Activated CD8-positive, alpha-beta T cell treated with anti-CD3 and anti-CD28 coated beads, Interleukin-2, amount 10 ng/mL, durations not matched to agents 7 days and 5 days (primary cell): ENCODE measurements at regions of chr14 and their contacts with region 1.

Region 1: GRCh38 chr14:73058224-73058921 is at the start of gene RBM25:
- DNase-seq: peak; percentile 98
- ATAC-seq: peak; percentile 97
- H3K4me3 Mint-ChIP-seq: no peak within 1 kb of the TSS
- H3K27ac Mint-ChIP-seq: no peak within 1 kb of the TSS
- H3K4me1 Mint-ChIP-seq: peaks cover 39% of the 10 kb centered on the region
- H3K27me3 Mint-ChIP-seq: peaks cover 3% of the 10 kb centered on the region
- total RNA-seq, gene RBM25: 89.5 to 95.1 TPM

Region 2: GRCh38 chr14:72154723-72155633 is 903.4 kb before region 1 on chr14:
- CTCF ChIA-PET with region 1: no interaction called
- POLR2A ChIA-PET with region 1: no interaction called
- DNase-seq: no peak
- ATAC-seq: no peak
- H3K4me3 Mint-ChIP-seq: no peak overlapping the region
- H3K27ac Mint-ChIP-seq: no peak overlapping the region
- H3K4me1 Mint-ChIP-seq: no peaks in the 10 kb centered on the region
- H3K27me3 Mint-ChIP-seq: no peaks in the 10 kb centered on the region

Region 3: GRCh38 chr14:73069585-73069984 is 11.2 kb after region 1 on chr14:
- CTCF ChIA-PET with region 1: interaction called, 3 read pairs
- POLR2A ChIA-PET with region 1: interaction called, 12 read pairs
- DNase-seq: no peak
- ATAC-seq: no peak
- H3K4me3 Mint-ChIP-seq: no peak overlapping the region
- H3K27ac Mint-ChIP-seq: no peak overlapping the region
- H3K4me1 Mint-ChIP-seq: peaks cover 5% of the 10 kb centered on the region
- H3K27me3 Mint-ChIP-seq: no peaks in the 10 kb centered on the region

Region 4: GRCh38 chr14:73136387-73137225 is 78.2 kb after region 1 on chr14 and contains the start of gene PSEN1:
- CTCF ChIA-PET with region 1: no interaction called
- POLR2A ChIA-PET with region 1: interaction called, 13 read pairs
- DNase-seq: peak; percentile 99
- ATAC-seq: peak; percentile 94
- H3K4me3 Mint-ChIP-seq: peak within 1 kb of the TSS; percentile 80
- H3K27ac Mint-ChIP-seq: peak within 1 kb of the TSS; percentile 97
- H3K4me1 Mint-ChIP-seq: peaks cover 27% of the 10 kb centered on the region
- H3K27me3 Mint-ChIP-seq: no peaks in the 10 kb centered on the region
- total RNA-seq, gene PSEN1: 33.0 to 33.7 TPM